ENCODE measurements at regions of chr3 and their contacts with region 1.

Region 1: DNA sequence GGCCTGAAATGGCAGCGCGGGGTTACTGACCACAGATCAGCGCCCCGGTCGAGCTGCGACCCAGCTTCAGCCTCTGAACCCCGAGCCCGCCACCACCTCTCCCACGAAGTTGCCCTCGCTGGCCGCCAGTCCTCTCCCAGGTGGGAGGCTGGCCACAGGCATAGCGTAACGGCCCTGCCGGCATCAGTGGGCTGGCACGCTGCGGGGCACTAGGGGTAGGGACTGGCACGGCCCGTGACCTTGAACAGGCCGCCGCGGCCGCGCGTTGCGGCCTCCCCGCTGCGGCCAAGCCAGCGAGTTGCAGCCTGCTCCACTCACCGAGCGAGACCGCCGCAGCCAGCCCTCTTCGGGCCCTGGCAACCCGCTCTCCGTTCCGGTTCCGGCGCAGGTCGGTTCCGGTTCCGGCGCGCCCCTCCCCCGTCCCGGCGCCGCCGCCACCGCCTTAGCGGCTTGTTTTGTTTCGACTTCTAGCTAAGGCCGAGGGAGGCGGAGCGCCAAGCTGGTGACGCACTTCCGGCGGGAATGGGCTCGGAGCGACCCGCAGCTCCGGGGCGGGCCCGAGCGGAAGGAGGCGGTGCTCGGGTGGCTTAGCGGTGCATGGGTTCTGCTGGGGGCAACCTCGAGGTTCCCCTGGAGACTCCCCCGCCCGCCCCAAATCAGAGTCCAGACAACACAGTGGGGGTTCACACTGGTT is at the start of gene USP19:
- DNase-seq: peak; percentile 93 to 97 (median 95)
- H3K4me3 ChIP-seq: peak within 1 kb of the TSS; percentile 51 to 100 (median 96)
- H3K27ac ChIP-seq: peak within 1 kb of the TSS; percentile 68 to 98 (median 94)
- H3K27me3 ChIP-seq: no peaks in the 10 kb centered on the region
- CTCF ChIP-seq: peak in 27 of 56 donors; percentile 6 to 52 (median 26)
- total RNA-seq, gene USP19: 46.6 to 83.3 (median 64.9) TPM

Region 2: GRCh38 chr3:49021813-49022687 is 98.5 kb before region 1 on chr3 and contains the start of gene NDUFAF3:
- intact Hi-C with region 1: loop called in 1 of 2 experiments (anchors 5 kb)
- DNase-seq: peak; percentile 85 to 95 (median 91)
- H3K4me3 ChIP-seq: peak within 1 kb of the TSS; percentile 73 to 100 (median 98)
- H3K27ac ChIP-seq: peak within 1 kb of the TSS; percentile 76 to 99 (median 97)
- H3K27me3 ChIP-seq: no peaks in the 10 kb centered on the region
- CTCF ChIP-seq: peak; percentile 80 to 99 (median 96)
- total RNA-seq, gene NDUFAF3: 57.3 to 129 (median 81.1) TPM

Region 3: GRCh38 chr3:49032646-49033304 is 87.8 kb before region 1 on chr3:
- intact Hi-C with region 1: loop called in 1 of 2 experiments (anchors 5 kb)
- DNase-seq: no peak
- H3K4me3 ChIP-seq: no peak overlapping the region
- H3K27ac ChIP-seq: peak overlapping the region in 9 of 59 donors; percentile 16 to 67 (median 30)
- H3K27me3 ChIP-seq: no peaks in the 10 kb centered on the region
- CTCF ChIP-seq: no peak

Measured in dorsolateral prefrontal cortex (tissue), 120 donors.